HEK293 (cell line): ENCODE measurements at regions of chr1 and their contacts with region 1.

Region 1: GRCh38 chr1:48202030-48202752 is 20.3 kb upstream of the SLC5A9 start:
- H3K4me3 ChIP-seq: no peak overlapping the region
- H3K27ac ChIP-seq: no peak overlapping the region
- H3K4me1 ChIP-seq: no peaks in the 10 kb centered on the region
- CTCF ChIP-seq: peak; percentile 63

Region 2: GRCh38 chr1:47710329-47711071 is 491.7 kb before region 1 on chr1:
- CTCF ChIA-PET with region 1: no interaction called
- POLR2A ChIA-PET with region 1: no interaction called
- H3K4me3 ChIP-seq: no peak overlapping the region
- H3K27ac ChIP-seq: peak overlapping the region; percentile 77; the same call in 1 of the 2 replicates
- H3K4me1 ChIP-seq: peaks cover 6% of the 10 kb centered on the region; the same call in 1 of the 2 replicates
- CTCF ChIP-seq: peak; percentile 95

Region 3: DNA sequence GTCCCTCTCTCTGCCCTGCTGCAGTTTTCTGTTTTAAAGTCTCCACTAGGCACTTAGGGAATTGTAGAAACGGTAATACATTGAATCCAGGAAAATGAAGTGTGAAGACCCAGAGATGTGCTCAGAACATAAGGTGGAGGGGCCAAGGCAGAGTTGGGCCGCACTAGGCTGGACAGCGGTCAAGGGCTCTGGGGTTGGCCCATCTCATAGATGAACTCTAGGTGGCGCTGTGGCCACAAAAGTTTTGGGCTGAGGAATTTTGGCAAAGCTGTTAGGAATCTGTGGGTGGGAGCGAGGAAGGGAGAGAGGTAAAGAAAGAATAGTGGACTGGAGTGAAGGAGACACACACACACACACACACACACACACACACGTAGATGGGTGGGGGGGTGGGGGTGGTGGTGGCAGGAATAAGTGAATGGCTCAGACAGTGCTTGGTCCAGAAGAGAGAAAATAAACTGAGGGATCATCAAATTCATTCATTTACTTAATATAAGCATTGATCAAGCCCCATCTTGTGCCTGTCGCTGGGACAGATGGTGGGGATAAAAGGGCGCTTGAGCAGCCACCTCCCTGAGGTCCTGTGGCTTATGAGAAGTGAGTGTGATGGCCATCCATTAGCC is 463.5 kb before region 1 on chr1:
- CTCF ChIA-PET with region 1: interaction called, 34 read pairs
- POLR2A ChIA-PET with region 1: no interaction called
- H3K4me3 ChIP-seq: no peak overlapping the region
- H3K27ac ChIP-seq: no peak overlapping the region
- H3K4me1 ChIP-seq: no peaks in the 10 kb centered on the region
- CTCF ChIP-seq: no peak

Region 4: DNA sequence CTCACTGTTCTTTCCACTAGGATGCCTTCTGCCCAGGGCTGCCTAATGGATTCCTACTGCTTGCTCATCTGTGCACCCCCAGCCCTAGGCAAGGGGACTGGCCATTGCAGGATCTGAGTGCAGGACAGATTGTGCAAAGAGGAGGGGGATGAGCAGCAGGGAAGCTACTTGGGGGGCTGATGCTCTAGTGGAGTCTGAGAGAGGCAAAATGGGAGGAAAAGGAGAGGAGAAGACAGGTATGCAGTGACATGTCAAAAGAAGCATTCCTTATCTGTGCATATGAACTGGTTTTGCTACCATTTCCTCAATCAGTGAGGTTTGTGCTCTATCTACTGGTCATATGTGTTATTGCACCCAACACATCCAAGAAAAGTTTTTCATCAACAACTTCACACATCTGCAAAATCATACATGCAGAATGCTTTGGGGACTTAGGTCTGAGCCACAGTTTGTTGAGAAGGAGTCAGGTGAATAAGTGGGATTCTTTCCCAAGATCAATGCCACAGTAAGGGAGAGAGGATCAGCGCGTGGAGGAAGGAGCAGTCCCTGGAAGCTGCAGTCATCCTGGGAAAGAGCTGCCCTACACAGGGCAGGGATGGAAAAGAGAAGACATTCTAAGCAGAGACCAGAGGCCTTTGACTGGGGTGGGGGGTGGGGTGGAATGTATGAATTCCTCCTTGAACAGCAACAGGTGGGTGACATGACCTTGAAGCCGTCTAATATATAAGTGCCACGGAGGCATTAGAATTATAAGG is 34.7 kb after region 1 on chr1:
- CTCF ChIA-PET with region 1: interaction called, 22 read pairs
- POLR2A ChIA-PET with region 1: no interaction called
- H3K4me3 ChIP-seq: no peak overlapping the region
- H3K27ac ChIP-seq: no peak overlapping the region
- H3K4me1 ChIP-seq: no peaks in the 10 kb centered on the region
- CTCF ChIP-seq: peak; percentile 74

Region 5: GRCh38 chr1:48414264-48414663 is 212.1 kb after region 1 on chr1:
- CTCF ChIA-PET with region 1: no interaction called
- POLR2A ChIA-PET with region 1: no interaction called
- H3K4me3 ChIP-seq: no peak overlapping the region
- H3K27ac ChIP-seq: no peak overlapping the region
- H3K4me1 ChIP-seq: no peaks in the 10 kb centered on the region
- CTCF ChIP-seq: no peak